Activated T-helper 2 cell treated with anti-CD3 and anti-CD28 coated beads, Interferon-gamma antibody, Interleukin-2, Interleukin-4, amounts not matched to agents 10 μg/mL and 5 μg/mL and 100 μg/mL, durations not matched to agents 14 hours and 24 hours and 36 hours (primary cell): ENCODE measurements at regions of chr10 and their contacts with region 1.

Region 1: GRCh38 chr10:91797874-91798648 is at the start of gene TNKS2:
- DNase-seq: peak; percentile 92
- H3K4me3 Mint-ChIP-seq: peak within 1 kb of the TSS; percentile 98
- H3K27ac Mint-ChIP-seq: peak within 1 kb of the TSS; percentile 98
- H3K4me1 Mint-ChIP-seq: peaks cover 56% of the 10 kb centered on the region
- H3K27me3 Mint-ChIP-seq: peaks cover 3% of the 10 kb centered on the region
- total RNA-seq, gene TNKS2: 27.2 and 28.1 TPM in 2 replicates

Region 2: GRCh38 chr10:90871766-90872647 is 926.1 kb before region 1 on chr10 and contains the start of gene RPP30:
- intact Hi-C with region 1: loop called (anchors 2 kb)
- DNase-seq: peak; percentile 76
- H3K4me3 Mint-ChIP-seq: peak within 1 kb of the TSS; percentile 100
- H3K27ac Mint-ChIP-seq: peak within 1 kb of the TSS; percentile 97
- H3K4me1 Mint-ChIP-seq: peaks cover 25% of the 10 kb centered on the region
- H3K27me3 Mint-ChIP-seq: peaks cover 21% of the 10 kb centered on the region
- total RNA-seq, gene RPP30: 69.1 and 73.4 TPM in 2 replicates

Region 3: GRCh38 chr10:91409869-91410637 is 388.0 kb before region 1 on chr10 and contains the start of gene HECTD2:
- intact Hi-C with region 1: loop called (anchors 2 kb)
- DNase-seq: peak; percentile 76
- H3K4me3 Mint-ChIP-seq: peak within 1 kb of the TSS; percentile 87
- H3K27ac Mint-ChIP-seq: peak within 1 kb of the TSS; percentile 90
- H3K4me1 Mint-ChIP-seq: peaks cover 16% of the 10 kb centered on the region
- H3K27me3 Mint-ChIP-seq: peaks cover 17% of the 10 kb centered on the region
- total RNA-seq, gene HECTD2: 6.6 and 8.2 TPM in 2 replicates

Region 4: DNA sequence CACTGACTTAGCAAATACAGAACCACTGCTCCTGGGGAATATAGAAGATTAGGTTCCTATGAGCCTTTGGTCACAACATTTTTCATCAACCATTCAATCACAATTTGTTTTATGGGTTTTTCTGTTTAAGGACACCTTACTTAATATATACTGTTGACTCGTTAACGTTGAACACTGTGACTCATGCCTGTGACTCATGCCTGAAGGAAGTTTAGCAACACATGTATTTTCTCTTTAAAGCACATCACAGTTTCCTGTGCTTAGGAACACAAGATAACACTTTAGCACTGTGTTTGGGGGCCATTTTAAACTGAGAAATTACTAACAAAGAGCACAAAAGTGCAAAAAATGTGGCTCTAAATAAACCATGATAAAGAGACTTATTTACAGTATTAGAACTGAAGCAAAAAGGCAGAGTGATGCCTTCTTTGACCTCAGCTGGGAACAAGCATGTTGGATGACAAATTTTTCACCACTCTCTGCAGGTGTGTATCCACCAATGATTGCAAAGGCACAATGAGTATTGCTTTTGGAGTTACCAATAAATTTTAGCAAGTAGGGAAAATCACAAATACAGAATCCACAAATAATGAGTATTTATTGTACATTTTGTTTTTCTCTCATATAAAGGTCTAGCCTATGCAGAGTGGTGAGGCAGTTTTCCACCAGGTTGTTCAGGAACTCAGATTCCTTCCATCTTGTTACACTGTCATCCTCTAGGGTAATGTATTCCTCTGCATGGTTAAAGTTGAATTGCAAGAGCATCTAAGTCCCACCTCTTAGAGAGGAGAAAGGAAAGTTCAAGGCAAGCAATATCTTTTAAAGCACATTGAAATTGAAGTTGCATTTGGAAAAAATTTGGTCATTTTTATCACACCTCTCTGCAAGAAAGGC is 104.0 kb after region 1 on chr10:
- intact Hi-C with region 1: loop called (anchors 2 kb)
- DNase-seq: peak; percentile 19
- H3K4me3 Mint-ChIP-seq: no peak overlapping the region
- H3K27ac Mint-ChIP-seq: peak overlapping the region; percentile 91
- H3K4me1 Mint-ChIP-seq: peaks cover 22% of the 10 kb centered on the region
- H3K27me3 Mint-ChIP-seq: no peaks in the 10 kb centered on the region

Region 5: GRCh38 chr10:91923371-91924211 is 125.5 kb after region 1 on chr10 and contains the start of gene BTAF1:
- intact Hi-C with region 1: loop called (anchors 1 kb)
- DNase-seq: peak; percentile 89
- H3K4me3 Mint-ChIP-seq: peak within 1 kb of the TSS; percentile 87
- H3K27ac Mint-ChIP-seq: peak within 1 kb of the TSS; percentile 100
- H3K4me1 Mint-ChIP-seq: peaks cover 29% of the 10 kb centered on the region
- H3K27me3 Mint-ChIP-seq: peaks cover 4% of the 10 kb centered on the region
- total RNA-seq, gene BTAF1: 66.0 and 68.2 TPM in 2 replicates

Region 6: DNA sequence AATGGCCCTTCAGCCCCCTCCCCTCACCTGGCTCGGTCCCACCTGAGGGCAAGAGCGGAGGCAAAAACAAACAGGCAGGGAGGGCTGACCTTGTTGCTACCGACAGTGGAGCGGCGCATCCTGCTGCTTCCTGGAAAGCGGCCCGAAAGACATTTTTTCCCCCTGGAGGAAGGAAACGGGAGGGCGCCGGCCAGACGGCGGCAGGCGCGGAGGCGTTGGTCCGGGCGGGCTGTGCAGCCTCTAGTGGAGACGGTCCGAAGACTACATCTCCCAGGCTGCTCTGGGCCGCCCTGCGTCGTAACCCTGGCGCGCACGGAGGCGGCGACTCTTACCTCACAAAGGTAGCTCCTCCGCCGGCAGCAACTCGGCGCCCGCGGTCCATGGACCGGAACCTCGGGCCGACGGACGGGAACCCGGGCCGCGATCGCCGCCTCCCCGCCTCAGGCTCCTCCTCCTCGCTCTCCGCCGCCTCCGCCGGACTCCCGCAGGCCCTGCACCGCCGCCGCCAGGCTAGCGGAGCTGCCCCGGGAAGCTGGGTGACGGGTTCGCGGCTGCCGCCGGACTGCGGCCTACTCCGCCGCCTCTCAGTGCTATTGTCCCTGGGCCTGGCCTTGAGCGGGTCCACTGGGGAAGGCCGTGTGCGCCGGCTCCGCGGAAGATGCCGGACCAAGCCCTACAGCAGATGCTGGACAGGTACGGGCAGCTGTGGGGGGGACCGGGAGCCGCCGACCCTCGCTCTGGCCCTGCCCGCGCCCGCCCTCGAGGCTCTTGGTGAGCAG is 493.0 kb after region 1 on chr10 and contains the starts of genes CPEB3 and MARCHF5:
- intact Hi-C with region 1: loop called (anchors 5 kb)
- DNase-seq: peak; percentile 89
- H3K4me3 Mint-ChIP-seq: peak within 1 kb of the TSS; percentile 94
- H3K27ac Mint-ChIP-seq: peak within 1 kb of the TSS; percentile 77
- H3K4me1 Mint-ChIP-seq: peaks cover 21% of the 10 kb centered on the region
- H3K27me3 Mint-ChIP-seq: no peaks in the 10 kb centered on the region
- total RNA-seq, gene CPEB3: 1.9 TPM in 2 replicates
- total RNA-seq, gene MARCHF5: 19.4 and 20.3 TPM in 2 replicates